ENCODE measurements at regions of chr2 and their contacts with region 1.

Region 1: DNA sequence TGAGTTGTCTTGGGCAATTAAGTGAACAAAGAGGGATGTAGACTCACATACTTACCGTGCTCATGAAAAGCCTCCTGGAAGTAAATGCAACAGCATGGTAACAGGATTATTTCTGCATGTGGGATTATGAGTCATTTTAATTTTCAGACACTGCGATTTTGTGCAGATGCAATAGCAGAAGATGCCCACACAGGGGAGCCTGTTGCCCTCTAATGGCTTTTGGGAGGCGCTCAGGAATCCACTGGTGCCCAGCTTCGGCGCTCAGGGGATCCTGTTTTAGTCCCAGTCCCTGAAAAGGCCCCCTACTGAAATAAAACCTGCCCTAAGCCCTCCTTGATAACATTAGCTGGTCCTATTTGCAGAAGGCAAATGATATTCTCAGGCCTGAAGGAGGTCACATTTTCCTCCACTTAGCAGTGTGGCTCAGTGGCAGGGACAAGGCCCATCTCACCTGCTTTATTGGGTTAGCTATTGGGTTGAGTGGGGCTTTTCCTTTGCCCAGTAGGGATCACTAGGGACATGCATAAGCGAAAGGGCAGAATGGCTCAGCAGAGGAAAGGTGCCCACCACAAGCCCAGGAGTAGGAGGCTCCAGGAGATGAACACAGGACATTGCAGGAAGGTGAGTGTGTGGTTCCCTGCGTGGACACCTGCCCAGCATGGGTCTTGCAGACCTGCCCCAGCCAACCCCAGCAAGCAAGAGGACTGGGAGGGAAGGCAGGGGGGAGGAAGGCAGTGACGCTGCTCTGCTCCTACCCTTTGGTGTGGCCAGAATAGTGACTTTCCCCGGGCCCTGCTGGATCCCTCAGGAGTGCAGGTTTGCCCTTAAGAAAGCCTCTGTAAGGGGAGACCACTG is 26.5 kb upstream of the KCNS3 start:
- DNase-seq: peak; percentile 93
- H3K4me3 ChIP-seq: no peak overlapping the region
- H3K27ac ChIP-seq: peak overlapping the region; percentile 51
- H3K4me1 ChIP-seq: peaks cover 5% of the 10 kb centered on the region
- H3K27me3 ChIP-seq: no peaks in the 10 kb centered on the region
- CTCF ChIP-seq: peak; percentile 94

Region 2: DNA sequence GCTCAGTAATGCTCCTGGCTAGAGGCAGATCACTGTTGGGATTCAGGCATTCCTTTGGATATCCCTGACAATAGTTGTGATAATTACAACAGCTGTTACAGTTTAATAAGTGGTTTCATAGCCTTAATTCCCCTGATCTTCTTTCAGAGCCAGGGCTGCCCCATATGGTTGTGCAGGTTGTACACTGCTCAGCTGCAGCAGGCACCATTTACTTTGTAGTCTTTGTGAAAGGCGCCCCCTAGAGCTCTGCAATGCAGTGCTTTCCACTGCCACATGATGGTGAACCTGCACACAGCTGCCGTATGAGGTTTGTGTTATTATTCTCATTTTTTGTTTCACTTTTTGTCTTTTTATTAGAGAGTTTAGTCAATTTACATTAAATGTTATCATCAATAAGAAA is 265.6 kb after region 1 on chr2:
- CTCF ChIA-PET with region 1: interaction called, 5 read pairs
- POLR2A ChIA-PET with region 1: no interaction called
- intact Hi-C with region 1: loop called (anchors 10 kb)
- DNase-seq: peak; percentile 78
- H3K4me3 ChIP-seq: no peak overlapping the region
- H3K27ac ChIP-seq: no peak overlapping the region
- H3K4me1 ChIP-seq: no peaks in the 10 kb centered on the region
- H3K27me3 ChIP-seq: no peaks in the 10 kb centered on the region
- CTCF ChIP-seq: peak; percentile 90

Region 3: DNA sequence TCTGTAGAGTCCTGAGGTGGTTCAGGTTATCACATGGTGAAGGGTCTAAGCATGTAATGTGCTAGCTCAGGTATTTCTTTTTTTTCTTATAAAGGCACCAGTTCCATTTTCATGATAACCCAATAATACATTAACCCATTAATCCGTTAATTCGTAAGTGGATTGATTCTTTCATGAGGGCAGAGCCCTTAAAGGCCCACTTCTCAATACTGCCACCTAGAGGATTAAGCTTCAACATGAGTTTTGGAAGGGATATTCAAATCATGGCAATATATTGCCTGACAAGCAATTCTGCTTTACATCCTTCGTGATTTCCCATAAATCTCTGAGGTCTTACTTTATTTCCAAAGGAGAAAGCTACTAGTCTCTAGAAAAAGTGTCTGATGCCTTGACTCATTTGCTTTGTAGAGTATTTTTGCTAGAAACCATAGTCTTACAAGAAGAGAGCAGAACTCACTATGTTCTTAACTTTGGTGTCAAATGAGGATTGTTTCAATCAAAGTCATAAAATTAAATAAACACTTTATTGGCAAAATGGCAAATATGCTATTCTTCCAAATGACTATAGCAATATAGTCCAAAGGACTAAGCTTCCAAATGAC is 297.8 kb after region 1 on chr2:
- CTCF ChIA-PET with region 1: no interaction called
- POLR2A ChIA-PET with region 1: no interaction called
- intact Hi-C with region 1: loop called (anchors 1 kb)
- DNase-seq: peak; percentile 77
- H3K4me3 ChIP-seq: no peak overlapping the region
- H3K27ac ChIP-seq: no peak overlapping the region
- H3K4me1 ChIP-seq: no peaks in the 10 kb centered on the region
- H3K27me3 ChIP-seq: no peaks in the 10 kb centered on the region
- CTCF ChIP-seq: peak; percentile 87

Region 4: GRCh38 chr2:18178736-18179349 is 326.9 kb after region 1 on chr2:
- CTCF ChIA-PET with region 1: interaction called, 5 read pairs
- POLR2A ChIA-PET with region 1: no interaction called
- intact Hi-C with region 1: loop called (anchors 2 kb)
- DNase-seq: peak; percentile 85
- H3K4me3 ChIP-seq: no peak overlapping the region
- H3K27ac ChIP-seq: peak overlapping the region; percentile 81
- H3K4me1 ChIP-seq: peaks cover 31% of the 10 kb centered on the region
- H3K27me3 ChIP-seq: no peaks in the 10 kb centered on the region
- CTCF ChIP-seq: peak; percentile 87

Region 5: GRCh38 chr2:18244845-18245244 is 392.9 kb after region 1 on chr2:
- CTCF ChIA-PET with region 1: no interaction called
- POLR2A ChIA-PET with region 1: no interaction called
- intact Hi-C with region 1: loop called (anchors 5 kb)
- DNase-seq: peak; percentile 88
- H3K4me3 ChIP-seq: no peak overlapping the region
- H3K27ac ChIP-seq: peak overlapping the region; percentile 96
- H3K4me1 ChIP-seq: peaks cover 68% of the 10 kb centered on the region
- H3K27me3 ChIP-seq: no peaks in the 10 kb centered on the region
- CTCF ChIP-seq: peak; percentile 45

Region 6: GRCh38 chr2:18378020-18378653 is 526.2 kb after region 1 on chr2:
- CTCF ChIA-PET with region 1: interaction called, 4 read pairs
- POLR2A ChIA-PET with region 1: no interaction called
- intact Hi-C with region 1: loop called (anchors 2 kb)
- DNase-seq: peak; percentile 82
- H3K4me3 ChIP-seq: no peak overlapping the region
- H3K27ac ChIP-seq: peak overlapping the region; percentile 63
- H3K4me1 ChIP-seq: peaks cover 58% of the 10 kb centered on the region
- H3K27me3 ChIP-seq: no peaks in the 10 kb centered on the region
- CTCF ChIP-seq: peak; percentile 87